ENCODE measurements at regions of chr14 and their contacts with region 1.

Region 1: DNA sequence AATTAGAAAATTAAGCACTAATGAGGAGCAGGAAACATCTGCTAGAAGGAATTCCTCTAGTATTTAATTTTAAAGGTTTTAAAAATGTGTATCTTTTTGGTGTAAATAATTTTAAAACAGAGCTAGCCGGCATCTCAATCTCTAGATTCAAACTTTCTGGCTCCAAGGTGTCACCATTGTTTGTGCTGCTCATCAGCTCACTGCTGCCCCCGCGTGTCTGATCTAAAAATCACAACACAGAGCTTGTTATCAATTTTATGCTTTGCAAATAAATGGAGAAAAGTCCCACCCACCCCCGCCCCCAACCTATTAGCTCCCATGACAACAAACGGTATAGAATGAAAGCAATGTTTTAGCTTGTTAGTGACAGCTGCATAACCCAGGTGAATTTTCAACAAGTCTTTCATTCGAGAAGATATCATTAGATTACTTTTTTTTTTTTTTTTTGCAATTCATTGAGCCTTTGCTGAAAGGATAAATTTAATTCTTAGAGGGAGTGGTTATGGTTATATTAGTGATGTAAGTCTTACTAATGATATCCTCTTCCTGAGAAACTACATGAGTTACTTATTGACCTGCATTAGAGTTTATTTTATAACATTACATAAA is 11.3 kb upstream of the ABHD12B start:
- DNase-seq: peak; percentile 78
- ATAC-seq: peak; percentile 73
- H3K4me3 Mint-ChIP-seq: peak overlapping the region; percentile 89
- H3K27ac Mint-ChIP-seq: peak overlapping the region; percentile 77
- H3K4me1 Mint-ChIP-seq: peaks cover 12% of the 10 kb centered on the region
- H3K27me3 Mint-ChIP-seq: no peaks in the 10 kb centered on the region
- CTCF ChIP-seq: peak; percentile 10

Region 2: GRCh38 chr14:49314737-49315136 is 1545.8 kb before region 1 on chr14:
- CTCF ChIA-PET with region 1: no interaction called
- POLR2A ChIA-PET with region 1: no interaction called
- intact Hi-C with region 1: no loop called
- DNase-seq: no peak
- ATAC-seq: no peak
- H3K4me3 Mint-ChIP-seq: no peak overlapping the region
- H3K27ac Mint-ChIP-seq: no peak overlapping the region
- H3K4me1 Mint-ChIP-seq: no peaks in the 10 kb centered on the region
- H3K27me3 Mint-ChIP-seq: peaks cover 2% of the 10 kb centered on the region
- CTCF ChIP-seq: no peak

Region 3: GRCh38 chr14:50542941-50543418 is 317.6 kb before region 1 on chr14:
- CTCF ChIA-PET with region 1: interaction called, 5 read pairs
- POLR2A ChIA-PET with region 1: no interaction called
- intact Hi-C with region 1: loop called (anchors 1 kb)
- DNase-seq: no peak
- ATAC-seq: peak; percentile 71
- H3K4me3 Mint-ChIP-seq: no peak overlapping the region
- H3K27ac Mint-ChIP-seq: no peak overlapping the region
- H3K4me1 Mint-ChIP-seq: peaks cover 8% of the 10 kb centered on the region
- H3K27me3 Mint-ChIP-seq: no peaks in the 10 kb centered on the region
- CTCF ChIP-seq: no peak

Region 4: DNA sequence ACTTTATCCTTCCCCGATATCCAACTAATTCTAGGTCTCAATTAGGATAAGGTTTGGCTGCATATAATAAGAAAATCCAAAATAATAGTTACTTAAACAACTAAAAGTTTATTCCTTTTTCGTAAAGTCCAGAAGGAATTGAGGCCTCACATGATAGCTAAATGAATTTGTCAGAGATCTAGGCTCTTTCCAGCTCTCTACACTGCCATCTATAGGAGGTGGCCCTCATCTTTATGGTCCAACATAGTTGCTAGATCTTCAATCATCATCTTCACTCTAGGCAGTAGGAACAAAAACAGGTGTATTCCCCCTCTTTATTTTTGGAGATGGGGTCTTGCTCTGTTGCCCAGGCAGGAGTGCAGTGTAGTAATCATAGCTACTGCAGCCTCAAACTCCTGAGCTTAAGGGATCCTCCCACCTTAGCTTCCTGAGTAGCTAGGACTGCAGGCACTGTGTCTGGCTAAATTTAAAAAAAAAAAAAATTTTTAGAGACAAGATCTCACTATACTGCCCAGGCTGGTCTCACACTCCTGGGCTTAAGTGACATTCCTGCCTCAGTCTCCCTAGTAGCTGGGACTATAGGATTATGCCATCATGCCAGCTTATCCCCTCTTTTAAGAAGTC is 146.0 kb before region 1 on chr14:
- CTCF ChIA-PET with region 1: interaction called, 19 read pairs
- POLR2A ChIA-PET with region 1: no interaction called
- intact Hi-C with region 1: no loop called
- DNase-seq: no peak
- ATAC-seq: peak; percentile 68
- H3K4me3 Mint-ChIP-seq: no peak overlapping the region
- H3K27ac Mint-ChIP-seq: no peak overlapping the region
- H3K4me1 Mint-ChIP-seq: no peaks in the 10 kb centered on the region
- H3K27me3 Mint-ChIP-seq: no peaks in the 10 kb centered on the region
- CTCF ChIP-seq: no peak

Region 5: GRCh38 chr14:50762001-50762930 is 98.3 kb before region 1 on chr14:
- CTCF ChIA-PET with region 1: interaction called, 29 read pairs
- POLR2A ChIA-PET with region 1: interaction called, 8 read pairs
- intact Hi-C with region 1: no loop called
- DNase-seq: no peak
- ATAC-seq: no peak
- H3K4me3 Mint-ChIP-seq: no peak overlapping the region
- H3K27ac Mint-ChIP-seq: no peak overlapping the region
- H3K4me1 Mint-ChIP-seq: no peaks in the 10 kb centered on the region
- H3K27me3 Mint-ChIP-seq: no peaks in the 10 kb centered on the region
- CTCF ChIP-seq: no peak

Region 6: DNA sequence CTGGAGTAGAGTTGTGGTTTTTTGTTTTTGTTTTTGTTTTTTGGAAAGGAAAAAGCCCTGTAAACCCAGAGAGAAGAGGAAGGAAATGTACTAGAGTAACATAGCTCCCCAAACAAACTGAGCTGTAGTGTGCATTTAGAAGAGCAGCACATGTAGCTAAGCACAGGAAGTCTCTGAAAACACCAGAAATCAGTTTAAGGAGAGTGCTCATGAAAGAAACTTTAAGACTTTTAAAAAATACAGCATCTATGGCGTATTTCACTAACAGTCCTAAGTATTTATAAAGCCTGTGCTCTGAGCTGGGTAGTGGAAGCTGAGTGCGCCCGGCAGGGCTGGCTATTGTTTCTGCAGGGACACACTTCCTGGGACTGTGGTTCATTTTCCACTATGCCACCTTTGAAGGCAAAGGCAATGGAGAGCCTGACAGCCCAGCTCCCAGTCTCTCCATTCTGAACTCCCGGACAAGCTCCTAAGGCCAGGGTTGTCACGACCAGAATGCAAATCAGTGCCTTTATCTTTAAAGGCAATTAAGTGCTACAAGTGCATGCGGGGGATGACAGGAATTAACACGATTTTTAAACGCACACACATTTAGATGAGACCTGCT is 75.0 kb before region 1 on chr14:
- CTCF ChIA-PET with region 1: interaction called, 111 read pairs
- POLR2A ChIA-PET with region 1: interaction called, 13 read pairs
- intact Hi-C with region 1: loop called (anchors 1 kb)
- DNase-seq: no peak
- ATAC-seq: no peak
- H3K4me3 Mint-ChIP-seq: peak overlapping the region; percentile 24
- H3K27ac Mint-ChIP-seq: peak overlapping the region; percentile 71
- H3K4me1 Mint-ChIP-seq: peaks cover 72% of the 10 kb centered on the region
- H3K27me3 Mint-ChIP-seq: no peaks in the 10 kb centered on the region
- CTCF ChIP-seq: no peak

Region 7: GRCh38 chr14:50823051-50823761 is 37.4 kb before region 1 on chr14:
- CTCF ChIA-PET with region 1: interaction called, 19 read pairs
- POLR2A ChIA-PET with region 1: interaction called, 19 read pairs
- intact Hi-C with region 1: loop called (anchors 1 kb)
- DNase-seq: no peak
- ATAC-seq: peak; percentile 32
- H3K4me3 Mint-ChIP-seq: peak overlapping the region; percentile 81
- H3K27ac Mint-ChIP-seq: peak overlapping the region; percentile 97
- H3K4me1 Mint-ChIP-seq: peaks cover 95% of the 10 kb centered on the region
- H3K27me3 Mint-ChIP-seq: no peaks in the 10 kb centered on the region
- CTCF ChIP-seq: no peak

Region 8: DNA sequence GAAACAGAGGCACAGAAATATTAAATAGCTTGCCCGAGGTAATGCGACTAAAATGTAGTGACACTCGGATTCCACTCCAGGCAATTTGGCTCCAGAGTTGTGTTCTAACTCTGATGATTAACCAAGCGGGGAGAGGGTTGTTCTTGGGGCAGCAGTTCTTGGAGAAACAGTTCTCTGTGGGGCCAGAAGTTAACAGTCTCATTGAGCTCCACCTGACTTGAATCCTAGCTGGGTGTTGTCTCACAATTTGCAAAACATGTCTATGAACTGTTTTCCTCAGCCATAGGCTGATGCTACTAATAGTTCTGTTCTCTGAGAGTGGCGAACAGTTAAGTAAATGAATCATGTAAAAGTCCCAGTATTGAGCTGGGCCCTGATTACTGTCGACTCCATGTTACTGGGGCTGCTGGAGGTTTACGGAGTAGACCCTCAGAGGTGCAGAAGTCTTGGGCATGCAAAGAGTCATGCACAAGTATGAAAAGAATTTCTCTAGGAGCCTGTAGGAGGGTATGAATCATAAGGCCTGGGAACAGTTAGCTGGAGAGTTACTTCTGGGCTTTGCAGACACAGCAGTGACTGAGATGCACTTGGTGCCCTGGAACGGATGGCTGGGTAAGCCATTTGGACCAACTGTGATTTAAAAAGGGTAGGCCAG is 14.2 kb before region 1 on chr14:
- CTCF ChIA-PET with region 1: interaction called, 10 read pairs
- POLR2A ChIA-PET with region 1: interaction called, 4 read pairs
- intact Hi-C with region 1: no loop called
- DNase-seq: no peak
- ATAC-seq: no peak
- H3K4me3 Mint-ChIP-seq: no peak overlapping the region
- H3K27ac Mint-ChIP-seq: no peak overlapping the region
- H3K4me1 Mint-ChIP-seq: peaks cover 5% of the 10 kb centered on the region
- H3K27me3 Mint-ChIP-seq: no peaks in the 10 kb centered on the region
- CTCF ChIP-seq: no peak

Region 9: GRCh38 chr14:50964595-50965390 is 104.2 kb after region 1 on chr14:
- CTCF ChIA-PET with region 1: no interaction called
- POLR2A ChIA-PET with region 1: no interaction called
- intact Hi-C with region 1: no loop called
- DNase-seq: no peak
- ATAC-seq: no peak
- H3K4me3 Mint-ChIP-seq: no peak overlapping the region
- H3K27ac Mint-ChIP-seq: no peak overlapping the region
- H3K4me1 Mint-ChIP-seq: no peaks in the 10 kb centered on the region
- H3K27me3 Mint-ChIP-seq: peaks cover 2% of the 10 kb centered on the region
- CTCF ChIP-seq: no peak

Region 10: GRCh38 chr14:50985124-50985858 is 124.7 kb after region 1 on chr14:
- CTCF ChIA-PET with region 1: no interaction called
- POLR2A ChIA-PET with region 1: no interaction called
- intact Hi-C with region 1: no loop called
- DNase-seq: no peak
- ATAC-seq: no peak
- H3K4me3 Mint-ChIP-seq: no peak overlapping the region
- H3K27ac Mint-ChIP-seq: no peak overlapping the region
- H3K4me1 Mint-ChIP-seq: no peaks in the 10 kb centered on the region
- H3K27me3 Mint-ChIP-seq: peaks cover 4% of the 10 kb centered on the region
- CTCF ChIP-seq: no peak

Measured in activated B cell treated with CpG ODN at 0.5 μM for 24 hours (primary cell).